Activated CD4-positive, alpha-beta memory T cell treated with anti-CD3 and anti-CD28 coated beads for 36 hours (primary cell): ENCODE measurements at regions of chr11 and their contacts with region 1.

Region 1: GRCh38 chr11:66480117-66480938 is at the start of gene DPP3:
- DNase-seq: peak; percentile 98
- H3K4me3 Mint-ChIP-seq: peak within 1 kb of the TSS; percentile 88
- H3K27ac Mint-ChIP-seq: peak within 1 kb of the TSS; percentile 87
- H3K4me1 Mint-ChIP-seq: peaks cover 25% of the 10 kb centered on the region
- H3K27me3 Mint-ChIP-seq: no peaks in the 10 kb centered on the region
- total RNA-seq, gene DPP3: 76.1 to 89.7 TPM

Region 2: GRCh38 chr11:66408488-66409214 is 71.7 kb before region 1 on chr11:
- CTCF ChIA-PET with region 1: interaction called, 5 read pairs
- POLR2A ChIA-PET with region 1: no interaction called
- intact Hi-C with region 1: loop called (anchors 1 kb)
- DNase-seq: peak; percentile 93
- H3K4me3 Mint-ChIP-seq: peak overlapping the region; percentile 67
- H3K27ac Mint-ChIP-seq: no peak overlapping the region
- H3K4me1 Mint-ChIP-seq: peaks cover 4% of the 10 kb centered on the region
- H3K27me3 Mint-ChIP-seq: peaks cover 17% of the 10 kb centered on the region

Region 3: GRCh38 chr11:66466225-66467027 is 13.9 kb before region 1 on chr11 and contains the start of gene PELI3:
- CTCF ChIA-PET with region 1: interaction called, 17 read pairs
- POLR2A ChIA-PET with region 1: interaction called, 15 read pairs
- intact Hi-C with region 1: loop called (anchors 1 kb)
- DNase-seq: peak; percentile 96
- H3K4me3 Mint-ChIP-seq: peak within 1 kb of the TSS; percentile 79
- H3K27ac Mint-ChIP-seq: peak within 1 kb of the TSS; percentile 64
- H3K4me1 Mint-ChIP-seq: peaks cover 31% of the 10 kb centered on the region
- H3K27me3 Mint-ChIP-seq: no peaks in the 10 kb centered on the region
- total RNA-seq, gene PELI3: 7.0 to 8.5 TPM

Region 4: GRCh38 chr11:66545701-66546367 is 65.5 kb after region 1 on chr11 and contains the start of gene ZDHHC24:
- CTCF ChIA-PET with region 1: no interaction called
- POLR2A ChIA-PET with region 1: interaction called, 9 read pairs
- intact Hi-C with region 1: loop called (anchors 1 kb)
- DNase-seq: peak; percentile 96
- H3K4me3 Mint-ChIP-seq: peak within 1 kb of the TSS; percentile 80
- H3K27ac Mint-ChIP-seq: peak within 1 kb of the TSS; percentile 74
- H3K4me1 Mint-ChIP-seq: peaks cover 14% of the 10 kb centered on the region
- H3K27me3 Mint-ChIP-seq: no peaks in the 10 kb centered on the region
- total RNA-seq, gene ZDHHC24: 13.5 to 14.9 TPM